Breast epithelium (tissue), 4 donors: ENCODE measurements at regions of chr12 and their contacts with region 1.

Region 1: GRCh38 chr12:120402217-120402616 is 33.3 kb upstream of the MSI1 start:
- DNase-seq: no peak
- H3K4me3 ChIP-seq: no peak overlapping the region
- H3K27ac ChIP-seq: no peak overlapping the region
- H3K4me1 ChIP-seq: no peaks in the 10 kb centered on the region
- H3K27me3 ChIP-seq: peaks cover 0 to 4% of the 10 kb centered on the region in 2 donors
- CTCF ChIP-seq: no peak
- POLR2A ChIP-seq: no peak

Region 2: GRCh38 chr12:120265473-120266179 is 136.6 kb before region 1 on chr12 and contains the start of gene PXN:
- intact Hi-C with region 1: no loop called
- DNase-seq: peak; percentile 77 to 86
- H3K4me3 ChIP-seq: peak within 1 kb of the TSS; percentile 96 to 98 (median 98)
- H3K27ac ChIP-seq: peak within 1 kb of the TSS; percentile 93 to 94
- H3K4me1 ChIP-seq: peaks cover 11 to 29% of the 10 kb centered on the region in 2 donors
- H3K27me3 ChIP-seq: no peaks in the 10 kb centered on the region
- CTCF ChIP-seq: peak; percentile 43 to 73 (median 62)
- POLR2A ChIP-seq: peak; percentile 18
- total RNA-seq, gene PXN: 44.8 to 74.1 (median 53.9) TPM

Region 3: GRCh38 chr12:120528861-120529525 is 126.8 kb after region 1 on chr12 and contains the start of gene COQ5:
- intact Hi-C with region 1: no loop called
- DNase-seq: peak; percentile 83 to 85
- H3K4me3 ChIP-seq: peak within 1 kb of the TSS; percentile 74
- H3K27ac ChIP-seq: peak within 1 kb of the TSS; percentile 92 to 97
- H3K4me1 ChIP-seq: no peaks in the 10 kb centered on the region
- H3K27me3 ChIP-seq: no peaks in the 10 kb centered on the region
- CTCF ChIP-seq: no peak
- POLR2A ChIP-seq: peak; percentile 50
- total RNA-seq, gene COQ5: 26.2 to 33.0 (median 26.5) TPM

Region 4: GRCh38 chr12:121260091-121260490 is 857.9 kb after region 1 on chr12:
- intact Hi-C with region 1: loop called (anchors 5 kb)
- DNase-seq: no peak
- H3K4me3 ChIP-seq: no peak overlapping the region
- H3K27ac ChIP-seq: no peak overlapping the region
- H3K4me1 ChIP-seq: no peaks in the 10 kb centered on the region
- H3K27me3 ChIP-seq: no peaks in the 10 kb centered on the region
- CTCF ChIP-seq: no peak
- POLR2A ChIP-seq: no peak